ENCODE measurements at regions of chr1 and their contacts with region 1.

Region 1: DNA sequence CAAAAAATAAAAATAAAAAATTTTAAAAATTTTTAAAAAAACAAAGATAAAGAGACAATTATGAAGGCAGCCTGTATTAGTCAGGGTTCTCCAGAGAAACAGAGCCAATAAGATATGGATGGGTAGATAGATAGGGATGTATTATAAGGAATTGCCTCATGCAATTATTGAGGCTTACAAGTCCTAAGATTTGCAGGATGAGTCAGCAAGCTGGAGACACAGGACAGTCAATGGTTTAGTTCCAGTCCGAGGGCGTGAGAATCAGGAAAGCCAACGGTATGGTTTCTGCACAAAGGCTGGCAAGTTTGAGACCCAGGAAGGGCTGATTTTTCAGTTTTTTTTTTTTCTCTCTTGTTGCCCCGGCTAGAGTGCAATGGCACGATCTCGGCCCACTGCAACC is 24.1 kb upstream of the EIF4G3 start:
- DNase-seq: no peak
- H3K4me3 ChIP-seq: no peak overlapping the region
- H3K27ac ChIP-seq: no peak overlapping the region
- H3K4me1 ChIP-seq: no peaks in the 10 kb centered on the region
- H3K27me3 ChIP-seq: no peaks in the 10 kb centered on the region
- CTCF ChIP-seq: no peak
- POLR2A ChIP-seq: no peak

Region 2: GRCh38 chr1:20987831-20988825 is 212.6 kb before region 1 on chr1:
- intact Hi-C with region 1: loop called (anchors 5 kb)
- DNase-seq: no peak
- H3K4me3 ChIP-seq: no peak overlapping the region
- H3K27ac ChIP-seq: peak overlapping the region in 1 of 3 donors; percentile 10
- H3K4me1 ChIP-seq: peaks cover 18 to 26% of the 10 kb centered on the region in 2 donors
- H3K27me3 ChIP-seq: no peaks in the 10 kb centered on the region
- CTCF ChIP-seq: no peak
- POLR2A ChIP-seq: no peak